ENCODE measurements at regions of chr7 and their contacts with region 1.

Region 1: GRCh38 chr7:114865564-114865963 is 56.3 kb upstream of the MDFIC start:
- DNase-seq: peak; percentile 42
- H3K27ac ChIP-seq: no peak overlapping the region
- CTCF ChIP-seq: peak; percentile 69

Region 2: GRCh38 chr7:114765331-114766040 is 100.1 kb before region 1 on chr7:
- CTCF ChIA-PET with region 1: no interaction called
- POLR2A ChIA-PET with region 1: no interaction called
- DNase-seq: no peak
- H3K27ac ChIP-seq: no peak overlapping the region
- CTCF ChIP-seq: no peak

Region 3: GRCh38 chr7:115217373-115217772 is 351.8 kb after region 1 on chr7:
- CTCF ChIA-PET with region 1: interaction called, 13 read pairs
- POLR2A ChIA-PET with region 1: no interaction called
- DNase-seq: peak; percentile 11
- H3K27ac ChIP-seq: no peak overlapping the region
- CTCF ChIP-seq: peak; percentile 37